IMR-90 (cell line): ENCODE measurements at regions of chr11 and their contacts with region 1.

Region 1: GRCh38 chr11:107427569-107428180 is 29.9 kb downstream of the CWF19L2 start:
- DNase-seq: no peak
- ATAC-seq: no peak
- H3K4me3 ChIP-seq: no peak overlapping the region
- H3K27ac ChIP-seq: no peak overlapping the region
- H3K4me1 ChIP-seq: no peaks in the 10 kb centered on the region
- H3K27me3 ChIP-seq: no peaks in the 10 kb centered on the region
- CTCF ChIP-seq: no peak
- POLR2A ChIP-seq: no peak
- RAD21 ChIP-seq: no peak

Region 2: DNA sequence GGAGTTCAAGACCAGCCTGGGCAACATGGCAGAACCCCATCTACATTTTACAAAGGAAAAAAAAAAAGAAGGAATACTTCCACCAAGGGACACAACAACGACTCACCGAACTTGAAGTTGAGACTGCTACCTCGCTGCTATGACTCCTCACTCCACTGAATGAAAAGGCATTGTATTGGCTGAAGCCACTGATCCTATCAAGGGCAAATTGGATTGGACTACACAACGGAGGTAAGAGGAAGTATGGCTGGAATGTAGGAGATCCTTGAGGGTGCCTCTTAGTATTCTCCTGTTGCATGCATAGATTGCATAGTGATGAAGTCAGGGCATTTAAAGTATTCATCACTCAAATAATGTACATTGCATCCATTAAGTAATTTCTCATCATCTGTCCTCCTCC is 68.0 kb before region 1 on chr11:
- CTCF ChIA-PET with region 1: no interaction called
- POLR2A ChIA-PET with region 1: no interaction called
- dilution Hi-C with region 1: no loop called
- in situ Hi-C with region 1: no loop called
- intact Hi-C with region 1: no loop called
- DNase-seq: peak; percentile 14
- ATAC-seq: no peak
- H3K4me3 ChIP-seq: no peak overlapping the region
- H3K27ac ChIP-seq: no peak overlapping the region
- H3K4me1 ChIP-seq: no peaks in the 10 kb centered on the region
- H3K27me3 ChIP-seq: no peaks in the 10 kb centered on the region
- CTCF ChIP-seq: no peak
- POLR2A ChIP-seq: no peak
- RAD21 ChIP-seq: no peak

Region 3: DNA sequence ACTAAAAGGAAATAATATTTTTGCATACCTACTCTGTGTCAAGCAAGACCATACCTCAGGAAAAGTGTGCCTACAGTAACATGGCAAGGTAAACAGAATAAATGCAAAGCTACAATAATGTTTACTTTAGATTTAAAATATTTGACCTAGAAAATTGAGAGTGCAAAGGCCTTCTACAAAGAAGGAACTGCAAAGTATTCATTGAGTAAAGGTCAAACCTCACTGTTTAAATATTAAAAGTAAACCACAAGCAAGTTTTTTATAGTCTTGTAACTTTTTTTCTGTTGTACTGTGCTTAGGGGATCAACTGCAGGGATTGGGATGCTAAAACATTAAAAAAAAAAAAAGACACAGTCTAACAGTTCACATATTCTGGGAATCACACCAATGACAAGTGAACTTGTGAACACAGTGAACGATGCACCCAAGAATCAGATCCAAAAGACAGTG is 18.9 kb before region 1 on chr11:
- CTCF ChIA-PET with region 1: interaction called, 4 read pairs
- POLR2A ChIA-PET with region 1: no interaction called
- dilution Hi-C with region 1: no loop called
- in situ Hi-C with region 1: no loop called
- intact Hi-C with region 1: loop called (anchors 1 kb)
- DNase-seq: no peak
- ATAC-seq: 0 out of 2 replicates have a peak, but pooled peaks have one; percentile 40
- H3K4me3 ChIP-seq: no peak overlapping the region
- H3K27ac ChIP-seq: no peak overlapping the region
- H3K4me1 ChIP-seq: no peaks in the 10 kb centered on the region
- H3K27me3 ChIP-seq: no peaks in the 10 kb centered on the region
- CTCF ChIP-seq: no peak
- POLR2A ChIP-seq: no peak
- RAD21 ChIP-seq: no peak